Aorta (tissue), 5 donors: ENCODE measurements at regions of chr5 and their contacts with region 1.

Region 1: DNA sequence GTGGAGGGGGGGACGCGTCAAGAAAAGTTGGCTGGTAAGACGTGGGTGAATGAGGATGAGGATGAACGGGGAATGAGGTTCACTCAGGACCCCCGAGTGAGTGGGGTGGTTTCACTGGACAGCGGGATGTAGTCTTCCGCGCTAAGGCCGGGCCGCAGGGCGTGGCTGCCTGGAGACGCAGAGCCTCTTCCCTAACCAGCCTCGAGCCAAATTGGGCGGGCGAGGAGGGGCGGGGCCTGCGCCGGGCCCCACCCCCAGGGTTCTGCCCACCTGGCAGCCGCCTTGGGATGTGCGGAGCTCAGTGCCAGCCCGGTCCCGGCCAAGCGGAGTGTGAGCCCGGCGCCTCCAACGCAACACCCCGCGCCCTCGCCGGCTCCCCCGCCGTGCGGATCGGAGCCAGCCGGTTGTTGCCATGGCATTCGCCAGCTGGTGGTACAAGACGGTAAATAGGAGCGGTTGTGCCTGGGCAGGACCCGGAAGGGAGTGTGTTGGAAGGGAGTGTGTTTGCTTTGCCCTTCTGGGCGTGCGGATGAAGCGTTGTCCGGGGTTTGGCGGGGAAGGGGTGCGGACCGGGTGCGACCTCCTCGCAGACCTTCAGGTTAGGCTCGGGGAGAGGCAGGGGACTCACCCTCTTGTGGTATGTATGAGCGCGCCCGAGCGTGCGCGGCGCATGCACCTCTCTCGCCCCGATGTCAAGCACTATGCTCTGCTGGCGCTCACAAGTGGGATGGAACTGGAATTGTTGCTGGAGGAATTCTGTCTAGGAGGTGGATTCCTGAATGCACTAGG is 743 bp downstream of the CAST start:
- DNase-seq: peak; percentile 95 to 98
- ATAC-seq: peak; percentile 96
- H3K4me3 ChIP-seq: peak overlapping the region; percentile 75 to 88
- H3K27ac ChIP-seq: peak overlapping the region; percentile 74 to 87
- H3K4me1 ChIP-seq: peaks cover 0 to 2% of the 10 kb centered on the region in 2 donors
- H3K27me3 ChIP-seq: no peaks in the 10 kb centered on the region

Region 2: GRCh38 chr5:96483878-96484277 is 179.0 kb before region 1 on chr5:
- intact Hi-C with region 1: no loop called
- DNase-seq: no peak
- ATAC-seq: no peak
- H3K4me3 ChIP-seq: no peak overlapping the region
- H3K27ac ChIP-seq: no peak overlapping the region
- H3K4me1 ChIP-seq: peaks cover 0 to 3% of the 10 kb centered on the region in 2 donors
- H3K27me3 ChIP-seq: no peaks in the 10 kb centered on the region

Region 3: DNA sequence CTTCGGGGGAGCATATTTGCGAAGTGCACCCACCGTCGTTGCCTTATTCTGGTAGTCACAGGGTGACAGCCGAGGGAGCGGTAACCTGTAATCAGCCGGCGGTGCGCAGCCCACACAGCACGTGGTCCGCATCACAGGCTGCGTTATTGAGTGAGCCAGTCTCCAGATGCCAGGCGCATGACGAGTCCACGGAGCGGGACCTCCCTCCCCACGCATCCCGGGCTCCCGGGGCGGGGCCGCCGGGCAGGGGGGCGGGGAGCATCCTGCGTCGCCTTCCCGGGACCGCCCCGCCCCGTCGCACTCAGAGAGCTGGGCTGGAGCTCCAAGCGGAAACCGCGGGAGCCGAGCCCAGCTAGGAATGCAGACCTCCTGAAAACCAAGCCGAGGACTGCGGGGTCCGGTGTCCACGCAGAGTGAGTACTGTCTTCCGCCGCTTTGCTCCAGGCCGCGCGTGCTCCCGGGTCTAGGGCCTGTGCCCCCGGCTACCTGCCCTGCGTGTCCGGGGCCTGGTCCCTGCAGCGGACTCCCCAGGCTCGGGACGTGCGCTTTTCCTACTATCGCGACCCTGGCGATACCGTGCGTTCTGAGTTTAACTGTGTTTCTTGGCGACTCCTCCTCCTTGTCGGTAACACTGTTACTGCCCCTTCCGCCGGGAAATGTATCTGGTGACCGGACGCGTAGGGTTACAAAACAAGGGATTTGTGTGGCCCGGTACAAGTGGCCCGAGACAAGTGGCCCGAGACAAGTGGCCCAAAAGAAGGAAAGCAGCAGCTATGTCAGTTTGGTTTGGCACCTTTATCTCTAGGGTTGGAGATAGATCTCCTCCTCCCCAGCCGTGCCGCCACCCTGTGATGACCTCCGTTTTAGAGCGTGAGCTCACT is 39.8 kb after region 1 on chr5:
- intact Hi-C with region 1: loop called (anchors 5 kb)
- DNase-seq: peak; percentile 97 to 99
- ATAC-seq: peak; percentile 99
- H3K4me3 ChIP-seq: peak overlapping the region; percentile 24 to 43
- H3K27ac ChIP-seq: peak overlapping the region; percentile 12 to 86
- H3K4me1 ChIP-seq: peaks cover 0 to 3% of the 10 kb centered on the region in 2 donors
- H3K27me3 ChIP-seq: no peaks in the 10 kb centered on the region

Region 4: DNA sequence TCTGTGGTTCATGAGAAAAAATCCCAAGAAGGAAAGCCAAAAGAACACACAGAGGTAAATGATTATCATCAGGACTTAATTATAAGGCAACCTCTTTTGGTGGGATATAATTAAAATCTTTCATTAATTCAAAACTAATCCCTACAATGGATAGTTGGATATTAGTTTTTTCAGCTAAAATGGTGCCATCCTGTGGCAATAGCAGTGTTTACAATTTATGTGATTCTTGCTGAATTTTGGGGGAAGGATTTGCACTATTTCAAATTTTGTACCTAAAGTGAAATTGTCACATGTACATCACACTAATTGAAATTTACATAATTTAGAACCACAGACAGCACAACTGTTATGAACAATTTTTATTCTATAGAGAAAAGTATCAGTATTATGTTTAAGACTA is 66.2 kb after region 1 on chr5:
- intact Hi-C with region 1: no loop called
- DNase-seq: no peak
- ATAC-seq: no peak
- H3K4me3 ChIP-seq: no peak overlapping the region
- H3K27ac ChIP-seq: no peak overlapping the region
- H3K4me1 ChIP-seq: no peaks in the 10 kb centered on the region
- H3K27me3 ChIP-seq: no peaks in the 10 kb centered on the region

Region 5: GRCh38 chr5:96790961-96791504 is 128.1 kb after region 1 on chr5:
- intact Hi-C with region 1: no loop called
- DNase-seq: no peak
- ATAC-seq: no peak
- H3K4me3 ChIP-seq: no peak overlapping the region
- H3K27ac ChIP-seq: no peak overlapping the region
- H3K4me1 ChIP-seq: peaks cover 2 to 3% of the 10 kb centered on the region in 2 donors
- H3K27me3 ChIP-seq: no peaks in the 10 kb centered on the region